CD4-positive, alpha-beta memory T cell (primary cell): ENCODE measurements at regions of chr1 and their contacts with region 1.

Region 1: GRCh38 chr1:27284425-27285273 is 37.3 kb upstream of the TMEM222 start:
- DNase-seq: peak; percentile 77 to 85 (median 81)
- H3K4me3 ChIP-seq: no peak overlapping the region
- H3K4me3 Mint-ChIP-seq: no peak overlapping the region
- H3K27ac ChIP-seq: no peak overlapping the region
- H3K27ac Mint-ChIP-seq: peak overlapping the region in 4 of 7 donors; percentile 42 to 73 (median 62)
- H3K4me1 ChIP-seq: no peaks in the 10 kb centered on the region
- H3K4me1 Mint-ChIP-seq: peaks cover 0 to 6% (median under 1%) of the 10 kb centered on the region in 4 donors
- H3K27me3 ChIP-seq: no peaks in the 10 kb centered on the region
- H3K27me3 Mint-ChIP-seq: no peaks in the 10 kb centered on the region

Region 2: GRCh38 chr1:27044613-27045151 is 240.0 kb before region 1 on chr1:
- CTCF ChIA-PET with region 1: interaction called, 60 read pairs
- POLR2A ChIA-PET with region 1: no interaction called
- intact Hi-C with region 1: loop called (anchors 1 kb)
- DNase-seq: peak; percentile 77 to 84 (median 81)
- H3K4me3 ChIP-seq: peak overlapping the region in 1 of 2 donors; percentile 32
- H3K4me3 Mint-ChIP-seq: peak overlapping the region; percentile 53 to 70 (median 66)
- H3K27ac ChIP-seq: peak overlapping the region; percentile 24
- H3K27ac Mint-ChIP-seq: peak overlapping the region in 6 of 7 donors; percentile 18 to 79 (median 42)
- H3K4me1 ChIP-seq: peaks cover 14% of the 10 kb centered on the region
- H3K4me1 Mint-ChIP-seq: peaks cover 13 to 22% (median 18%) of the 10 kb centered on the region in 4 donors
- H3K27me3 ChIP-seq: no peaks in the 10 kb centered on the region
- H3K27me3 Mint-ChIP-seq: peaks cover 0 to 2% of the 10 kb centered on the region in 2 donors

Region 3: GRCh38 chr1:27102707-27103491 is 181.8 kb before region 1 on chr1:
- CTCF ChIA-PET with region 1: interaction called, 145 read pairs
- POLR2A ChIA-PET with region 1: interaction called, 3 read pairs
- intact Hi-C with region 1: loop called (anchors 1 kb)
- DNase-seq: peak; percentile 67 to 79 (median 71)
- H3K4me3 ChIP-seq: no peak overlapping the region
- H3K4me3 Mint-ChIP-seq: peak overlapping the region in 1 of 8 donors; percentile 26
- H3K27ac ChIP-seq: no peak overlapping the region
- H3K27ac Mint-ChIP-seq: peak overlapping the region in 4 of 7 donors; percentile 24 to 71 (median 38)
- H3K4me1 ChIP-seq: no peaks in the 10 kb centered on the region
- H3K4me1 Mint-ChIP-seq: peaks cover 0 to 4% (median under 1%) of the 10 kb centered on the region in 4 donors
- H3K27me3 ChIP-seq: no peaks in the 10 kb centered on the region
- H3K27me3 Mint-ChIP-seq: no peaks in the 10 kb centered on the region

Region 4: DNA sequence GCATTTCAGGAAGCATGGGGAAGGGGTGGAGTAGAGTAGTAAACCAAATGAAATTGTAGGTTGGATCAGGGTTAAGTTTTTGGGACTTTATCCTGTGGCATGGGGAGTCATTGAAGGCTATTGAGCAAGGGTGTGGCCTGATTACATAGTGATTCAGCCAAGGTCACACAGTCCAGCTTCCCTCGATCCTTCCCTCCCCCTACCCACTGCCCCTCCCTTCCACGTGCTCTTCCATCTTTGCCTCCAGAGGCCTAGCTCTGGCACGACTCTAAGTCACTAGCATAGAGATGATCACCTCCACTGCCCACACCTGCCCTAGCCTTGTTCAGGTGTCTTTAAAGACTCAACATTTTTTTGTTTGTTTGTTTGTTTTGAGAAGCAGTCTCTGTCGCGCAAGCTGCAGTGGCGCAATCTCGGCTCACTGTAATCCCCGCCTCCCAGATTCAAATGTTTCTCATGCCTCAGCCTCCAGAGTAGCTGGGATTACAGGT is 92.6 kb before region 1 on chr1:
- CTCF ChIA-PET with region 1: interaction called, 24 read pairs
- POLR2A ChIA-PET with region 1: no interaction called
- intact Hi-C with region 1: no loop called
- DNase-seq: no peak
- H3K4me3 ChIP-seq: no peak overlapping the region
- H3K4me3 Mint-ChIP-seq: no peak overlapping the region
- H3K27ac ChIP-seq: no peak overlapping the region
- H3K27ac Mint-ChIP-seq: no peak overlapping the region
- H3K4me1 ChIP-seq: no peaks in the 10 kb centered on the region
- H3K4me1 Mint-ChIP-seq: no peaks in the 10 kb centered on the region
- H3K27me3 ChIP-seq: no peaks in the 10 kb centered on the region
- H3K27me3 Mint-ChIP-seq: peaks cover 0 to 2% of the 10 kb centered on the region in 2 donors

Region 5: DNA sequence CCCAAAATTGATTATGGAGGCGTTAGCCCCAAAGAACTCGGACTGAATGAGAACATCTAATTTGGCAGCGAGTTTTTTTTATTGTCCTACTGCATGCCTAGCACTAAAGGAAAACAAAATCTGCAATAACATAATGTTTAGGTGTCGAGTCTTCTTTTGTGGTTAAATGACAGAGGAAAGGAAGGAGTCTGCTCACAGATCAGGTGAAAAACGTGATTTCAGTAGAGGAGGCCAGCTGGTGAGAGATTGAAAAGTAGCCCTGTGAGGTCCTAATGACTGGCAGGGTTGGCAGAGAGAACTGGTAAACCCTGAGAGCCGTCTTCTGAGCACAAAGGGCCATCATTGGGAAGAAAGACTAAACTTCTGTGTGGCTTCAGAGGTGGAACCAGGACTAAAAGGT is 26.1 kb before region 1 on chr1:
- CTCF ChIA-PET with region 1: interaction called, 12 read pairs
- POLR2A ChIA-PET with region 1: no interaction called
- intact Hi-C with region 1: no loop called
- DNase-seq: peak in 2 of 5 donors; percentile 5 to 11
- H3K4me3 ChIP-seq: no peak overlapping the region
- H3K4me3 Mint-ChIP-seq: peak overlapping the region in 4 of 8 donors; percentile 5 to 56 (median 46)
- H3K27ac ChIP-seq: no peak overlapping the region
- H3K27ac Mint-ChIP-seq: peak overlapping the region in 6 of 7 donors; percentile 40 to 85 (median 67)
- H3K4me1 ChIP-seq: peaks cover 8% of the 10 kb centered on the region
- H3K4me1 Mint-ChIP-seq: peaks cover 14 to 37% (median 27%) of the 10 kb centered on the region in 4 donors
- H3K27me3 ChIP-seq: no peaks in the 10 kb centered on the region
- H3K27me3 Mint-ChIP-seq: no peaks in the 10 kb centered on the region

Region 6: DNA sequence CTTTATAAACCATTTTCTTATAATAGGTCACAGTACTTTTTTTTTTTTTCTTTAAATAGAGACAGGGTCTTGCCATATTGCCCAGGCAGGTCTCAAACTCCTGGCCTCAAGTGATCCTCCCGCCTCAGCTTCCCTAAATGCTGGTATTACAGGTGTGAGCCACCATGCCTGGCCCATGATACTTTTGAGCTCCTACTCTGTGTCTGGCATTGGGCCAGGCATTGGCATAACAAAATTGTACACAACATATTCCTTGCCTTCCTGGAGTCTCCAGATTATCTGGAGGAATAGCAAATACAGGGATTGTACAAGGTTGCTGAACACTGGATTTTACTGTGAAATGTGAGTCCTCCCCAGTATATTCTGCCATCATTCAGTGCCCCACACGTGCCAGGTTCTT is 30.7 kb after region 1 on chr1:
- CTCF ChIA-PET with region 1: no interaction called
- POLR2A ChIA-PET with region 1: no interaction called
- intact Hi-C with region 1: no loop called
- DNase-seq: no peak
- H3K4me3 ChIP-seq: no peak overlapping the region
- H3K4me3 Mint-ChIP-seq: no peak overlapping the region
- H3K27ac ChIP-seq: no peak overlapping the region
- H3K27ac Mint-ChIP-seq: peak overlapping the region in 1 of 7 donors; percentile 3
- H3K4me1 ChIP-seq: no peaks in the 10 kb centered on the region
- H3K4me1 Mint-ChIP-seq: no peaks in the 10 kb centered on the region
- H3K27me3 ChIP-seq: peaks cover 5% of the 10 kb centered on the region
- H3K27me3 Mint-ChIP-seq: peaks cover 3 to 4% of the 10 kb centered on the region in 2 donors